ENCODE measurements at regions of chr15 and their contacts with region 1.

Region 1: DNA sequence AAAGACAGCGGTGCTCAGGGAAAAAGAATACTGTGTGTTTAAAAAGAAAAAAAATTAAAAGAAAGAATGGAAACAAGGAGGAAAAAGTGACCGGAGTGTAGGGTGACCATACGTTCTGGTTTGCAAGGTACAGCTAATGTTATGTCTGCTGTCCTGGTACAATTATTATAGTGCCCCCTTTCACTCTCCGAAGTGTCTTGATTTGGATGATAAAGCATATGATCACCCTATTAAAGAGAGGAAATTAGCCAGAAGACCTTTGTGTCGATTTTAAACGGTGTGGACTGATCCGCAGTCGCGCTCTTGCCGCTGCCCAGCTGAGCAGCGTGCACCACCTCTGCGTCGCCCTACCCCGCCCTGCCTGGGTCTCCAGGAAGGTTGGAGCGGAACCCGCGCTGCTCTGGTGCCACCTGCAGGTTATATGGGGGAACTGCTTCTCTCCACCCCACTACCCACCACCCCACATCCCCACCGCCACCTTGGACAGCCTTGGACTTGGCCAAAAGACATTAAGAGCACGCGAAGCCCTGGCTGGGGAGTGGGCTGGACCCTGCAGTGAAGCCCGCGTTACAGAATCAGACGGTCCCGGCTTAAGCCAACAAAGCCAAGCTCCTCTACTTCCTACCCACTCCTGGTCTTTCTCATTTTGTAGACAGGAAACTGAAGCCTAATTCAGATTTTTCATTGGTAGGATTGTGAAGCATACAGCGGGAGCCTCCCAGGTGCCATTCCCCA is 41.2 kb upstream of the UBE2Q2 start:
- DNase-seq: peak; percentile 61
- H3K4me3 ChIP-seq: no peak overlapping the region
- H3K27ac ChIP-seq: no peak overlapping the region
- H3K4me1 ChIP-seq: peaks cover 2% of the 10 kb centered on the region
- H3K27me3 ChIP-seq: peaks cover 2% of the 10 kb centered on the region
- CTCF ChIP-seq: peak; percentile 80 to 85 (median 83)
- POLR2A ChIP-seq: no peak

Region 2: GRCh38 chr15:75508840-75509532 is 293.0 kb before region 1 on chr15:
- intact Hi-C with region 1: no loop called
- DNase-seq: no peak
- H3K4me3 ChIP-seq: no peak overlapping the region
- H3K27ac ChIP-seq: no peak overlapping the region
- H3K4me1 ChIP-seq: no peaks in the 10 kb centered on the region
- H3K27me3 ChIP-seq: no peaks in the 10 kb centered on the region
- CTCF ChIP-seq: peak in 3 of 4 experiments; percentile 46 to 53 (median 53)
- POLR2A ChIP-seq: no peak

Region 3: DNA sequence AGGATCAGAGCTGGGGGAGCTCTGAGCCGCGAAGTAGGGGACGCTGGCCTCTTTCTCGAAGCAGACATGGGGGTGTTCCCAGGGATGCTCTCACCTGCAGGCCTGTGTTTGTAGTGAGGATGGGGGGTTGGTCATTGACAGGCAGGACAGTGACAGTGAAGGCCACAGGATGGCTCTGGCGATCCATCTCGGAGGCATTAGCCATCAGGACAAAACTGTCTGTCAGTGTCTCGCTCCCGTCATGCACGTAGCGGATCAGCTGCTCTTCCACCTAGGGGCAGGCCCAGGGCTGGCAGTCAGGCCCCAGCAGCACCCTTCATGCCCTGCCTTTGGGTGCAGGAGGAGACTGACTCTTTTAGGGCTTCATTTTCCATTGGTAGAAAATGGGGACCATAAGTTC is 117.4 kb before region 1 on chr15:
- intact Hi-C with region 1: loop called (anchors 5 kb)
- DNase-seq: no peak
- H3K4me3 ChIP-seq: no peak overlapping the region
- H3K27ac ChIP-seq: no peak overlapping the region
- H3K4me1 ChIP-seq: no peaks in the 10 kb centered on the region
- H3K27me3 ChIP-seq: no peaks in the 10 kb centered on the region
- CTCF ChIP-seq: no peak
- POLR2A ChIP-seq: no peak

Region 4: GRCh38 chr15:75732809-75733451 is 69.1 kb before region 1 on chr15:
- intact Hi-C with region 1: loop called (anchors 5 kb)
- DNase-seq: peak; percentile 54
- H3K4me3 ChIP-seq: no peak overlapping the region
- H3K27ac ChIP-seq: no peak overlapping the region
- H3K4me1 ChIP-seq: no peaks in the 10 kb centered on the region
- H3K27me3 ChIP-seq: no peaks in the 10 kb centered on the region
- CTCF ChIP-seq: peak; percentile 71 to 91 (median 78)
- POLR2A ChIP-seq: no peak

Region 5: DNA sequence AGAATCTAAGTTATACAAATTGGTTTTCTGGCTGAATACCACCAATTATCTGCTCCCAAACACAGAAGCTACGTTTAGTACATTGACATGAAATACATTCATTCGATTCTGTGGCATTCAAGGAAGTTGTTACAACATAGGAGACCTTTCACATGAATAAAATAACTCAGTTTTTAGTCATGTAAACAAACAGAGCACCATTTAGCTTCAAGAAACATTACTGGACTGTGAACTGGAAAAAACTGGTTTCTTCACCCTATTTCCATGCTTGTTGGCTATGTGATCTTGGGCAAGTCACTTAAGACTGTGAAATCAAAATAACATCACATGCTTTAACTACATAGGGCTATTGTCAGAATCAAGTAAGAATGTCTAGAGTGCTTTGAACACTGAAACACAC is 164.0 kb after region 1 on chr15:
- intact Hi-C with region 1: no loop called
- DNase-seq: no peak
- H3K4me3 ChIP-seq: no peak overlapping the region
- H3K27ac ChIP-seq: no peak overlapping the region
- H3K4me1 ChIP-seq: no peaks in the 10 kb centered on the region
- H3K27me3 ChIP-seq: no peaks in the 10 kb centered on the region
- CTCF ChIP-seq: no peak
- POLR2A ChIP-seq: no peak